IMR-90 (cell line): ENCODE measurements at regions of chr5 and their contacts with region 1.

Region 1: DNA sequence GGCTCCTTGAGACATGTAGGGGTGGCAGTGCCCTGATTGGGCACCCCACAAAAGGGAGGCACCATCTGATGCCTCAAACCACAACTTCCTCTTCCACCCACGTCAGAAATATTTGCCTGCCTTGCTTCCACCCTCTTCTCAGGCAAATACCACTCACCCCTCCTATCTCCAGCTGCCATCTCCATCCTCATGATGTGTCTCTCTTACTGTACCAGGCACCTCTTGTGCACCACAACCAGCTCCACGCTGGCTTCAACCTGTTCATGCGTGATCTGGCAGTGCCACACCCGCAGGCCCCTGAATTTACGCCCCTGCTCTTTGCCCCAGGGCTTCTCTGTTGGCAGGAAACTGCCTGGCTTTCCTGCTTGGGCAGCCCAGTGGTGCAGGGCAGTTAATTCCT is 87.8 kb upstream of the HSPA9 start:
- DNase-seq: no peak
- ATAC-seq: no peak
- H3K4me3 ChIP-seq: no peak overlapping the region
- H3K27ac ChIP-seq: no peak overlapping the region
- H3K4me1 ChIP-seq: no peaks in the 10 kb centered on the region
- H3K27me3 ChIP-seq: peaks cover 20% of the 10 kb centered on the region
- CTCF ChIP-seq: no peak
- POLR2A ChIP-seq: no peak
- RAD21 ChIP-seq: no peak

Region 2: DNA sequence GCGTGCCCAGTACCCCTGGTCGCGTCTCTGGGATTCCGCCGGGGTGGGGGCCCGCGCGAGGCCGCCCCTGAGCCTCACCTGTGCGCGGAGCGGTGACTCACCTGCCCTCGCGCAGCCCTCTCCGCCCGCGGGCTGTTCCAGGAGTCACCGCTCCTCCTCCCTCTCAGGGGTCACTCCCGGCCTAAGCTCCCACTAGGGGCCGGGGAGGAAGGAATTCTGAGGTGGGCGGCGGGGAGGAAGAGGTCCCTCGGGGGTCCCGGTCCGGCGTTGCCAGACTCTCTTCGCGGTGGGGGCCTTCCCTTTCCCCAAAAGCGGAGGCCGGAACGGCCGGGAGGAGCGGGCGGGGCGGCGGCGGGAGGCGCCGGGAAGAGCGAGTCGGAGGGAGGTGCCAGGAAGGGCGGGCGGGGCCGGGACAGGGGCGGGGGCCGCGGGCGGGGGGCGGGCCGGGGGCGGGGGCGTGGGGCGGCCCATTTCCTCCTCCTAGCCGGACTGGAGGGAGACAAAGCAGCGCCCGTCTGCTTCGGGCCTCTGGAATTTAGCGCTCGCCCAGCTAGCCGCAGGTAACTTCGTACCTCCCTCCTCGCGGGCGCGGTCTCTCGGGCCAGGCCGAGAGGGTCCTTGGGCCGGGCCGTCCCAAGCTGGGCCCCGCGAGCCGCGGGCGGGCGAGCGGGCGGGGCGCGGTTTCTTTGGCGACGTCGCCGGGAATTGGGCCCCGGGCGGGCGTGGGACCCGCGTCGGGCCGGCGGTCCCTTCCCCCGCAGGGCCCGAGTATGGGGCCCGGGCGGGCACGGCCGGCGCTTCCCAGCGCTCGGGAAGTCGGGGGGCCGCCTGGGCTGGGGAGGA is 90.2 kb after region 1 on chr5 and contains the start of gene CTNNA1:
- CTCF ChIA-PET with region 1: no interaction called
- POLR2A ChIA-PET with region 1: no interaction called
- dilution Hi-C with region 1: no loop called
- in situ Hi-C with region 1: no loop called
- intact Hi-C with region 1: loop called (anchors 5 kb)
- DNase-seq: peak; percentile 49
- ATAC-seq: peak; percentile 91
- H3K4me3 ChIP-seq: peak within 1 kb of the TSS; percentile 95
- H3K27ac ChIP-seq: peak within 1 kb of the TSS; percentile 93
- H3K4me1 ChIP-seq: peaks cover 8% of the 10 kb centered on the region
- H3K27me3 ChIP-seq: no peaks in the 10 kb centered on the region
- CTCF ChIP-seq: no peak
- POLR2A ChIP-seq: peak; percentile 92
- RAD21 ChIP-seq: no peak
- total RNA-seq, gene CTNNA1: 395 and 471 TPM in 2 replicates